Caco-2 (cell line): ENCODE measurements at regions of chr2 and their contacts with region 1.

Region 1: DNA sequence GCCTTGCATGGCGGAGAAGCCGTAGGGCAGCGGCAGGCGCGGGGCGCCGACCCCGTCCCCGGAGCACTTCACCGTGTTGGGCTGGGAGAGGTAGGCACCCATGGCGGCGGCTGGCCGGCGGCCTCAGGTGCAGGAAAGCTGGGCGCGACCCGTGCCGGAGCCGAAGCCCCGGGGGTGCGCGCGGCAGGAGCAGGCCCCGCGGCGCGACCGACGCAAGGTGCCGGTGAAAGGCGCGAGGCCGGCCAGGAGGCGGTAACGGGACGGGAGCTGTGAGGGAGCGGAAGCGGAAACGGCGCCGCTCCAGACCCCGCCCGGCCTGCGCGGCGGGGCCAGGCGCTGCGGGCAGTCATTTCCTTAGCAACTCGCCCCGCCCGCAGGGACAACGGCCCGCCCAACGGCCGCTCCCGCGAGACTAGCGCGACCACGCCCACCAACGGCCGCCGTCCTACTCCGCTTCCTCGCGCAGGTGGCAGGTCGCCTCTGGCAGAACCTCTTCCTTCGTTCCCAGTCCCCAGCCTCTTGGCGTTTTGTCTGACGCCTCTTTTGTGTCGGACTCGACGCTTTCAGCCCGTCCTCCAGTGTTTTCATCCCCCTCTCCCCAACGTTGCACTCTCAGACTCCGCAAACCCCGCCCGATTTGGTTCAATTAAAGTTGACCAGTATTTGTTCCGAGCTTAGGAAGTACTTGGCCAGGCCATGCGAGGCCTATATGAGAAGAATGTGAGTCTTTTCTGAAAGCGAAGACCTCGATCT is at the start of gene PPM1G:
- DNase-seq: peak; percentile 96 to 99
- H3K4me3 ChIP-seq: peak within 1 kb of the TSS; percentile 68
- H3K4me3 Mint-ChIP-seq: peak within 1 kb of the TSS; percentile 84
- H3K27ac Mint-ChIP-seq: peak within 1 kb of the TSS; percentile 91
- H3K4me1 ChIP-seq: peaks cover 28% of the 10 kb centered on the region
- H3K4me1 Mint-ChIP-seq: peaks cover 33% of the 10 kb centered on the region
- H3K27me3 ChIP-seq: no peaks in the 10 kb centered on the region
- H3K27me3 Mint-ChIP-seq: no peaks in the 10 kb centered on the region
- CTCF ChIP-seq: no peak
- total RNA-seq, gene PPM1G: 140 and 149 TPM in 2 replicates

Region 2: DNA sequence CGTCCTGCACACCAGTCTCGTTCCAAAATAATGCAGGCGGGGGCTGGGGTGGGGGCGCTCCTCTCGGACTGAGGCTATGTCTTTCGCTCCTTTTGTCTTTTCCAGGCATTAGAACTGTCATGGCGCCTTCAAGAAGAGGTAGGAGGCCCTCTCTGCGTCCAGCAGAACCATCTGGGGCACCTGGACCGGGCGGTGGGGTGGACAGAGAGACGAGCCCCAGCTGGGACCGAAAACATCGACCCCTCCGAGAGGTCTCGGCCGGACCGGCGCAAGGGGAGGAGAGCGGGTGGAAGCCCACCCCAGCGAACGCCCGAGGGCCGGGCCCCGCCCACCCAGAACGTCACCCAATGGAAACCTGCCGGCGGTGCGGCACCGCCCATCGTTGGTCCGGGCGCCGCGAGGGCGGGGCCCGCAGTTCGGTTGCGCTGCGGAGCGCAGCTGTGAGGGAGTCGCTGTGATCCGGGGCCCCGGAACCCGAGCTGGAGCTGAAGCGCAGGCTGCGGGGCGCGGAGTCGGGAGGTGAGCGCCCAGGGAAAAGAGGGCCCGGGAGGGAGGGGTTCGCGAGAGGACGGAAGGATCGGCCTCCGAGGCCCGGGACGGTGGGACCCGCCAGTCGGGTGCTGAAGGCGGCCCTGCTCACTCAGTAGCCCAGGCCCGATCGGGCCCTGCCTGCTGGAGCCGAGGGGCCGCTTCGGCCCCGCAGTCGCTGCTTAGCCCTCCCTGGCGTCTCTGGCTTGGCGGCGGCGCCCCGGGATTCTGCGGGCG is 18.9 kb after region 1 on chr2 and contains the start of gene NRBP1:
- CTCF ChIA-PET with region 1: interaction called, 36 read pairs
- POLR2A ChIA-PET with region 1: interaction called, 63 read pairs
- intact Hi-C with region 1: loop called (anchors 1 kb)
- DNase-seq: peak; percentile 96 to 98
- H3K4me3 ChIP-seq: peak within 1 kb of the TSS; percentile 92
- H3K4me3 Mint-ChIP-seq: peak within 1 kb of the TSS; percentile 89
- H3K27ac Mint-ChIP-seq: peak within 1 kb of the TSS; percentile 94
- H3K4me1 ChIP-seq: peaks cover 19% of the 10 kb centered on the region
- H3K4me1 Mint-ChIP-seq: peaks cover 6% of the 10 kb centered on the region
- H3K27me3 ChIP-seq: no peaks in the 10 kb centered on the region
- H3K27me3 Mint-ChIP-seq: no peaks in the 10 kb centered on the region
- CTCF ChIP-seq: peak in 1 of 2 experiments; percentile 0
- total RNA-seq, gene NRBP1: 148 and 169 TPM in 2 replicates

Region 3: DNA sequence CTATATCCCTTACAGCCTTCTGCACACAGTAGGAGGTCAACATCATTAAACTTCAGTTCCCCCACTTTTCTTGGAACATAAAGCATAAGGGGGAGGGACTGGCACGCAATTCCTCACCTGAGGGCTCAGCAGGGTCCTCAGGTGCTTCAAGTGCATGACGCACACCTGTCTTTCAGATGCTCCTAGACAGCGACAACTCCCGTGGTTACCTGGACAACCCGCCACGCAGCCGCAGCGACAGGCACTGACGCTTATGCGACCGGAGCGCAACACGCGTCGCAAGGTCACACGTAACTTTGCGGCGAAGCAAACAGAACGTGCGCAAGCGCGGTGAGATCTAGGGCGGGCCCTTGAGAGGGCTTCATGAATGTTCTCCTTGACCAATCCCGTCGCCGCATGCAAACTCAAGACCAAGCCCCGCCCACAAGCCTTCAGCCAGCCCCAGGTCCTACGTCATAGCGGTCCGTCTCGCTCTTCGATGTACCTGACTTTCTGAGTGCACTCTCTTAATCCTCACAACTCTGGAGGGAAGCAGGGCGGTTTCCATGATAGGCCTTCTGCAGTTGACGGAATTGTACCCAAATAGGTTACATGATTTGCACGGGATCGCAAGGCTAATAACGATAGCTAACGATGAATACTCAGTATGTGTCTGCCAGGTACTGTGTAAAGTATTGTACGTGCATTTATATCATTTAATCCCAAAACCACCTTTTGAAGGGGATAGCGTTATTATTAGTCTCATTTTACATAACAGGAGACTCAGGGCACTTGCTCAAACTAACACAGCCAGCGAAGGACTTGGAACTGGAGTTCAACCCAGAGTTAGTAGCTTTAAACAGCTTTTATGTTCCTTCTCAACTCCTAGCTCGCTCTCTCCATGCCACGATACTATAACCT is 80.3 kb after region 1 on chr2 and contains the start of gene IFT172:
- CTCF ChIA-PET with region 1: no interaction called
- POLR2A ChIA-PET with region 1: no interaction called
- intact Hi-C with region 1: loop called (anchors 10 kb)
- DNase-seq: peak; percentile 99 to 100
- H3K4me3 ChIP-seq: peak within 1 kb of the TSS; percentile 46
- H3K4me3 Mint-ChIP-seq: peak within 1 kb of the TSS; percentile 85
- H3K27ac Mint-ChIP-seq: peak within 1 kb of the TSS; percentile 92
- H3K4me1 ChIP-seq: peaks cover 9% of the 10 kb centered on the region; the same call in 1 of the 2 replicates
- H3K4me1 Mint-ChIP-seq: peaks cover 6% of the 10 kb centered on the region
- H3K27me3 ChIP-seq: no peaks in the 10 kb centered on the region
- H3K27me3 Mint-ChIP-seq: peaks cover 2% of the 10 kb centered on the region
- CTCF ChIP-seq: no peak
- total RNA-seq, gene IFT172: 17.2 and 21.9 TPM in 2 replicates

Region 4: GRCh38 chr2:27591745-27592144 is 182.2 kb after region 1 on chr2:
- CTCF ChIA-PET with region 1: no interaction called
- POLR2A ChIA-PET with region 1: no interaction called
- intact Hi-C with region 1: no loop called
- DNase-seq: peak in 1 of 2 experiments; percentile 18
- H3K4me3 ChIP-seq: no peak overlapping the region
- H3K4me3 Mint-ChIP-seq: no peak overlapping the region
- H3K27ac Mint-ChIP-seq: no peak overlapping the region
- H3K4me1 ChIP-seq: no peaks in the 10 kb centered on the region
- H3K4me1 Mint-ChIP-seq: peaks cover 12% of the 10 kb centered on the region
- H3K27me3 ChIP-seq: no peaks in the 10 kb centered on the region
- H3K27me3 Mint-ChIP-seq: no peaks in the 10 kb centered on the region
- CTCF ChIP-seq: no peak

Region 5: GRCh38 chr2:27628767-27629709 is 219.5 kb after region 1 on chr2 and contains the starts of genes CCDC121 and GPN1:
- CTCF ChIA-PET with region 1: no interaction called
- POLR2A ChIA-PET with region 1: no interaction called
- intact Hi-C with region 1: loop called (anchors 10 kb)
- DNase-seq: peak; percentile 85 to 88
- H3K4me3 ChIP-seq: peak within 1 kb of the TSS; percentile 71
- H3K4me3 Mint-ChIP-seq: no peak within 1 kb of the TSS
- H3K27ac Mint-ChIP-seq: no peak within 1 kb of the TSS
- H3K4me1 ChIP-seq: peaks cover 10% of the 10 kb centered on the region; the same call in 1 of the 2 replicates
- H3K4me1 Mint-ChIP-seq: peaks cover 14% of the 10 kb centered on the region
- H3K27me3 ChIP-seq: no peaks in the 10 kb centered on the region
- H3K27me3 Mint-ChIP-seq: no peaks in the 10 kb centered on the region
- CTCF ChIP-seq: no peak
- total RNA-seq, gene CCDC121: 3.9 and 4.7 TPM in 2 replicates
- total RNA-seq, gene GPN1: 45.9 and 60.9 TPM in 2 replicates